ENCODE measurements at regions of chr18 and their contacts with region 1.

Region 1: GRCh38 chr18:45980229-45980628 is 13.1 kb upstream of the EPG5 start:
- DNase-seq: no peak
- H3K4me3 Mint-ChIP-seq: no peak overlapping the region
- H3K27ac Mint-ChIP-seq: no peak overlapping the region
- H3K4me1 Mint-ChIP-seq: peaks cover 3% of the 10 kb centered on the region
- H3K27me3 Mint-ChIP-seq: no peaks in the 10 kb centered on the region

Region 2: GRCh38 chr18:45920367-45920766 is 59.9 kb before region 1 on chr18:
- CTCF ChIA-PET with region 1: no interaction called
- intact Hi-C with region 1: no loop called
- DNase-seq: peak; percentile 30
- H3K4me3 Mint-ChIP-seq: no peak overlapping the region
- H3K27ac Mint-ChIP-seq: no peak overlapping the region
- H3K4me1 Mint-ChIP-seq: peaks cover 13% of the 10 kb centered on the region
- H3K27me3 Mint-ChIP-seq: no peaks in the 10 kb centered on the region

Region 3: DNA sequence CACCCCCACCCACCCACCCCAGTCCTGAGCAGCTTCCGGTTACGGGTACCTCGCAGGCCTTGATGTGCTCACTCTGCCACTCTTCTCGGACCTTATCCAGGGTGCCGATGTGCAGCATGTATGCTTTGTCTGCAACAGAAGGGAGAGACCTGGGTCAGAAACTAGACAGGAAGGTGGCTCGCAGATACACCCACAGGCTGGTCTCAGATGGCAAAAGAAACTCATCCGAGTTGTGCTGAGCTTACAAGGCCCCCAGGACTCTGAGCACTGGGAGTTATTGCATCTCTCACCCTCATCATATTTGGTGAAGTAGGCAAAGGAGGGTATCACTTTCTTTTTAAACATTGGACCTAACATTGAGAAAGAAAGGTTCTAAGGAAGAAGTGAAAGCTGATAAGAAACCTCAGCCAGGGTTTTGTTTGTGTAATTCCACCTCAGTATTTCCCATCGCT is 17.5 kb after region 1 on chr18:
- CTCF ChIA-PET with region 1: interaction called, 3 read pairs
- intact Hi-C with region 1: loop called (anchors 2 kb)
- DNase-seq: peak; percentile 45
- H3K4me3 Mint-ChIP-seq: peak overlapping the region; percentile 73
- H3K27ac Mint-ChIP-seq: peak overlapping the region; percentile 88
- H3K4me1 Mint-ChIP-seq: peaks cover 39% of the 10 kb centered on the region
- H3K27me3 Mint-ChIP-seq: no peaks in the 10 kb centered on the region